ENCODE measurements at regions of chr12 and their contacts with region 1.

Region 1: DNA sequence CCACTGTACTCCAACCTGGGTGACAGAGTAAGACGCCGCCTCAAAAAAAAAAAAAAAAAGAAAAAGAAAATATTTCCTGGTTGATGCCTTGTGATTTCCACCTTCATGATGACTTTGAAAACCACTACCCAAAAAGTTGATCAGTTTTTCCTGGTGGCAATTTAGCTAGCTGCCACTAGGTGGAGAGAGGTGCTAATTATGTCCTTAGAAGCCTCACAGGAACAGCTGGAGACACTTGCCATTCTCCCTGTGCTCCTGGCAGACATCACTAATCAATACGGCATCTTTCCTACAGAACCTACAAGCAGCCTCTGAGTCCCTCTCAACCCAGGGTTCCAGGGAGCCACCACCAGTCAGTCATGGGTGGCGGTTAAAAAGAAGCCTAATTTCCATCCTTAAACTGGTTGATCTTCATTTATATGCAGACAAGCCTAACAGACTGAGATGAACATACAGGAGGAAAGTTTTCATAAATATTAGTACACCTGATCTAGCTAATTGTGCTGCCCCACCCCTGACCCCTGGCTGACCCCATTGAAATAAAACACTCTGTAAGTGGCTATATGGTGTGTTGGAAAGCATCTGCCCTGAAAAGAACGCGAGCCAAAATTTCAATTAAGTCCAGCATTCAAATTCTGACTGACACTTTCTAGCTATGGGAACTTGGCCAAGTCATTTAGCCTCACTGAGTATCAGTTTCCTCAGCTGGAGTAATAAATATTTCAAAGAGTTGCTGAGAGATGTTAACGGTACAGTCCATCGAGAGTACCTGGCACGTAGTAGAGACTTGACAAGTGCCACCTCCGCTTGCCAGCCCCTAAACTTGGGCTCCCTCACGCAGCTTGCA is 6.2 kb upstream of the OAS1 start:
- DNase-seq: peak; percentile 64
- H3K4me3 Mint-ChIP-seq: no peak overlapping the region
- H3K27ac Mint-ChIP-seq: no peak overlapping the region
- H3K4me1 Mint-ChIP-seq: peaks cover 35% of the 10 kb centered on the region
- H3K27me3 Mint-ChIP-seq: peaks cover 36% of the 10 kb centered on the region
- CTCF ChIP-seq: peak; percentile 73

Region 2: DNA sequence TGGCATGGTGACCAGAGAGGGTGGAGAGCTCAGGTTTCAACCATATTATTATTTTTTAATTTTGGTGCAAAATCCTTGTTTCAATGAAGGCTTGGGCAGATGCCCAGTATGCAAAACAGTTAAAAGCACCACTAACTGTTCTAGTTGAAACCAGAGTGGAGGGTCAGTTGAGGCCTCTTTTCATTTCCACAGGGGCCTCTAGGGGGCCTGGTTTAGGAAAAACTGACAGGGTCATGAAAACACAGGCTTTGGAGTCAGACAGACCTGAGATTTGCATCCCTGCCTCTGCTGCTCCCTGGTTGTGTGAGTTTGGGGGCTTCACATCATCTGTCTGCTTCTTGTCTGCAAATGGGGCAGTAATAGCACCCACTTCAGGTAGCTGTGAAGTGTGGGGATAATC is 112.3 kb before region 1 on chr12:
- CTCF ChIA-PET with region 1: no interaction called
- intact Hi-C with region 1: no loop called
- DNase-seq: no peak
- H3K4me3 Mint-ChIP-seq: no peak overlapping the region
- H3K27ac Mint-ChIP-seq: no peak overlapping the region
- H3K4me1 Mint-ChIP-seq: no peaks in the 10 kb centered on the region
- H3K27me3 Mint-ChIP-seq: peaks cover 87% of the 10 kb centered on the region
- CTCF ChIP-seq: no peak

Region 3: DNA sequence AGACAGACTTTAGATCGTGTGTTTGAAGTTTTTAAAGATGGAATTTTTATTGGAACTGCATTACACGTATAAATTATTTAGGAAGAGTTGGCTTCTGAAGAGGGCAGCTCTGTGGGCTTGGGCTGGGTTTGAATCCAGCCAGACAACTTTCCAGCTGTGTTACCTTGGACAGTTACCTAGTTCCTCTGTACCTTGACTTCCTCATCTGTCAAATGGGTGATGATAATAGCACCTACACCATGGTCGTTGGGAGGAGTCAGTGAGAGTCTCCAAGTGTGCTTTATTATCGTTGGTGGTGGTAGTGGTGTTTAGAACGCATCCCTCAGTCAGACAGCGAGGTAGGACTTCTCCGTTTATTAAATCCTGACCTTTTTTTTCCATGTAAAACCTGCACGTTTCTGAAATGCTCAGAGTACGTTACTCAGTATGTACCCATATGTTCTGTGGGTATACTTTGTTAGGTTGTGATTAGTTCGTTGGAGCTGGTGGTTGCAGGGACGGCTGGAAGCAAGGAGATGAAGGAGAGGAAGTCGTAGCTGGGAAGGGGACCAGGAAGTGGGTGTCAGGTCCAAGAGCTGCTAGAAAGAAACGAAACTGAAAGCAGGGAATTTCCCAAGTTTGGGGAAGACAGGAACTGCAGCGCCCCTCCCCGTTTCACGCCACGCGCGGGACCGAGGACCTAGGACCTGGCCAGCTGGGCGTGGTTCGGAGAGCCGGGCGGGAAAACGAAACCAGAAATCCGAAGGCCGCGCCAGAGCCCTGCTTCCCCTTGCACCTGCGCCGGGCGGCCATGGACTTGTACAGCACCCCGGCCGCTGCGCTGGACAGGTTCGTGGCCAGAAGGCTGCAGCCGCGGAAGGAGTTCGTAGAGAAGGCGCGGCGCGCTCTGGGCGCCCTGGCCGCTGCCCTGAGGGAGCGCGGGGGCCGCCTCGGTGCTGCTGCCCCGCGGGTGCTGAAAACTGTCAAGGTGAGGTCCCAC is 37.5 kb after region 1 on chr12 and contains the start of gene OAS3:
- CTCF ChIA-PET with region 1: interaction called, 5 read pairs
- intact Hi-C with region 1: loop called (anchors 5 kb)
- DNase-seq: peak; percentile 92
- H3K4me3 Mint-ChIP-seq: peak within 1 kb of the TSS; percentile 96
- H3K27ac Mint-ChIP-seq: peak within 1 kb of the TSS; percentile 91
- H3K4me1 Mint-ChIP-seq: peaks cover 38% of the 10 kb centered on the region
- H3K27me3 Mint-ChIP-seq: no peaks in the 10 kb centered on the region
- CTCF ChIP-seq: no peak
- total RNA-seq, gene OAS3: 159 and 326 TPM in 2 replicates

Region 4: DNA sequence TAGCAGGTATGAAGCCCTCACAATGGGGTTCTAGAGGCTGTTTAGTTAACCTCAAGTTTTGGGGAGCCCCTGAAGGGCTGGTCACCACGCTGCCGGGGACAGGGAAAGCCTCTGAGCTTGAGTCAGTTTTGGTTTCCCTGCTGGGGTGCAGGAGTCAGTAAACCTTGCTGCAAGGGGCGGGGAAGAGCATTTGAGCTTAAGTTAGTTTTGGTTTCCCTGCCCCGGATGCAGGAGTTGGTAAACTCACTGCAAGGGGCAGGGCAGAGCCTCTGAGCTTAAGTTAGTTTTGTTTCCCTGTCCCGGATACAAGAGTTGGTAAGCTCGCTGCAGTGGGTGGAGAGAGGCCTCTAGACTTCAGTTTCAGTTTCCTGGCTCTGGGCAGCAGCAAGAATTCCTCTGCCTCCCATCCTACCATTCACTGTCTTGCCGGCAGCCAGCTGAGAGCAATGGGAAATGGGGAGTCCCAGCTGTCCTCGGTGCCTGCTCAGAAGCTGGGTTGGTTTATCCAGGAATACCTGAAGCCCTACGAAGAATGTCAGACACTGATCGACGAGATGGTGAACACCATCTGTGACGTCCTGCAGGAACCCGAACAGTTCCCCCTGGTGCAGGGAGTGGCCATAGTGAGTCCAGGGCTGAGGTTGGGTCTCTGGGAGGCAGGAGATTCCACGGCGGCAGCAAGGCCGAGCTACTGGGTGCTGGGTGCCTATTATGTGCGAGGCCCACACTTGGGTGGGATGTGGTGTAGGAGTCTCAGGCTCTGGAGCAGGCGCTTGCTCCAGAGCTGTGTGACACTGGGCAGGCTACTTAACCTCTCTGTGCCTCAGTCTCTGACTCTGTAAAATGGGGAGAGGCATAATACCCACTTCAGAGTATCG is 77.9 kb after region 1 on chr12 and contains the start of gene OAS2:
- CTCF ChIA-PET with region 1: interaction called, 11 read pairs
- intact Hi-C with region 1: loop called (anchors 2 kb)
- DNase-seq: peak; percentile 67
- H3K4me3 Mint-ChIP-seq: peak within 1 kb of the TSS; percentile 73
- H3K27ac Mint-ChIP-seq: peak within 1 kb of the TSS; percentile 62
- H3K4me1 Mint-ChIP-seq: no peaks in the 10 kb centered on the region
- H3K27me3 Mint-ChIP-seq: no peaks in the 10 kb centered on the region
- CTCF ChIP-seq: no peak
- total RNA-seq, gene OAS2: 58.1 and 211 TPM in 2 replicates

Region 5: GRCh38 chr12:113030875-113031525 is 130.5 kb after region 1 on chr12:
- CTCF ChIA-PET with region 1: no interaction called
- intact Hi-C with region 1: loop called (anchors 1 kb)
- DNase-seq: peak; percentile 43
- H3K4me3 Mint-ChIP-seq: no peak overlapping the region
- H3K27ac Mint-ChIP-seq: no peak overlapping the region
- H3K4me1 Mint-ChIP-seq: peaks cover 9% of the 10 kb centered on the region
- H3K27me3 Mint-ChIP-seq: peaks cover 53% of the 10 kb centered on the region
- CTCF ChIP-seq: peak; percentile 68